CD14-positive monocyte (primary cell): ENCODE measurements at regions of chr19 and their contacts with region 1.

Region 1: DNA sequence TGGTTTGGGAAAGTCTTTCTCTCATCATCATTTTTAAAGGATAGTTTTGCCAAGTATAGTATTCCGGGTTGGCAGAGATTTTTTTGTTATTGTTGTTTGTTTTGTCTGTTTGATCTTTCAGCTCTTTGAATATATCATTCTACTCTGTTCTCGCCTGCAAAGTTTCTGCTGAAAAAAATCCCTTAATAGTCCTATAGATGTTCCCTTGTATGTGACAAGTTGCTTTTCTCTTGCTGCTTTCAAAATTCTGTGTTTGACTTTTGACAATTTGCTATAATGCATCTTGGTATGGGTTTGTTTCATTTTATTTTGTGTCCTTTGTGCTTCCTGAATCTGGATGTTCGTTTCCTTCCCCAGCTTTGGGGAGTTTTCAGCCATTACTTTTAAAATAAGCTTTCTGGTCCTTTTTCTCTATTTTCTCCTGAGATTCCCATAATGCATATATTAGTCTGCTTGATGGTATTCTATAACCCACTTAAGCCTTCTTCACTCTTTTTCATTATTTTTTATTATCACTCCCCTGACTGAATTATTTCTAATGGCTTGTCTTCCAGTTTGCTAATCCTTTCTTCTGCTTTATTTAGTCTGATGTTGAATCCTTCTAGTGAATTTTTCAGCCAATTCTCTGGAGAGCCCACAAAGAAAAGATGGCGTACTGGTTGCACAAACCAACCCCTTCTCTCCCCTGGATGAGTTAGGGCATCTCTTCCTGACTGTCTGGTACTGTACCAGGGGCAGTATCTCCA is 14.6 kb downstream of the ZNF569 start:
- DNase-seq: no peak
- H3K4me3 ChIP-seq: peak overlapping the region in 1 of 3 experiments; percentile 18
- H3K4me3 Mint-ChIP-seq: no peak overlapping the region
- H3K27ac ChIP-seq: no peak overlapping the region
- H3K27ac Mint-ChIP-seq: no peak overlapping the region
- H3K4me1 ChIP-seq: no peaks in the 10 kb centered on the region
- H3K4me1 Mint-ChIP-seq: no peaks in the 10 kb centered on the region
- H3K27me3 ChIP-seq: no peaks in the 10 kb centered on the region
- H3K27me3 Mint-ChIP-seq: no peaks in the 10 kb centered on the region
- CTCF ChIP-seq: no peak

Region 2: GRCh38 chr19:37334179-37335071 is 118.2 kb before region 1 on chr19:
- intact Hi-C with region 1: no loop called
- DNase-seq: peak; percentile 79 to 86 (median 79)
- H3K4me3 ChIP-seq: peak overlapping the region; percentile 53 to 92 (median 64)
- H3K4me3 Mint-ChIP-seq: peak overlapping the region; percentile 85 to 90
- H3K27ac ChIP-seq: peak overlapping the region; percentile 29 to 89
- H3K27ac Mint-ChIP-seq: peak overlapping the region; percentile 77 to 91 (median 89)
- H3K4me1 ChIP-seq: peaks cover 8 to 17% of the 10 kb centered on the region in 2 donors
- H3K4me1 Mint-ChIP-seq: peaks cover 16% of the 10 kb centered on the region
- H3K27me3 ChIP-seq: no peaks in the 10 kb centered on the region
- H3K27me3 Mint-ChIP-seq: peaks cover 0 to 3% (median 0%) of the 10 kb centered on the region in 3 donors
- CTCF ChIP-seq: no peak

Region 3: DNA sequence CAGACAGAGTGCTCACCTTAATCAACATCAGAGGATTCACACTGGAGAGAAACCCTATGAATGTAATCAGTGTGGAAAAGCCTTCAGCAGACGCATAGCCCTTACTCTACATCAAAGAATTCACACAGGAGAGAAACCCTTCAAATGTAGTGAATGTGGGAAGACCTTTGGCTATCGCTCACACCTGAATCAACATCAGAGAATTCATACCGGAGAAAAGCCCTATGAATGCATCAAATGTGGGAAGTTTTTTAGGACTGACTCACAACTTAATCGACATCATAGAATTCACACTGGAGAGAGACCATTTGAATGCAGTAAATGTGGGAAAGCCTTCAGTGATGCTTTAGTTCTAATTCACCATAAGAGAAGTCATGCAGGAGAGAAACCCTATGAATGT is 63.4 kb before region 1 on chr19:
- intact Hi-C with region 1: loop called in 1 of 2 experiments (anchors 5 kb)
- DNase-seq: no peak
- H3K4me3 ChIP-seq: peak overlapping the region in 1 of 3 experiments; percentile 24
- H3K4me3 Mint-ChIP-seq: no peak overlapping the region
- H3K27ac ChIP-seq: no peak overlapping the region
- H3K27ac Mint-ChIP-seq: no peak overlapping the region
- H3K4me1 ChIP-seq: no peaks in the 10 kb centered on the region
- H3K4me1 Mint-ChIP-seq: no peaks in the 10 kb centered on the region
- H3K27me3 ChIP-seq: no peaks in the 10 kb centered on the region
- H3K27me3 Mint-ChIP-seq: no peaks in the 10 kb centered on the region
- CTCF ChIP-seq: no peak